ENCODE measurements at regions of chr7 and their contacts with region 1.

Region 1: DNA sequence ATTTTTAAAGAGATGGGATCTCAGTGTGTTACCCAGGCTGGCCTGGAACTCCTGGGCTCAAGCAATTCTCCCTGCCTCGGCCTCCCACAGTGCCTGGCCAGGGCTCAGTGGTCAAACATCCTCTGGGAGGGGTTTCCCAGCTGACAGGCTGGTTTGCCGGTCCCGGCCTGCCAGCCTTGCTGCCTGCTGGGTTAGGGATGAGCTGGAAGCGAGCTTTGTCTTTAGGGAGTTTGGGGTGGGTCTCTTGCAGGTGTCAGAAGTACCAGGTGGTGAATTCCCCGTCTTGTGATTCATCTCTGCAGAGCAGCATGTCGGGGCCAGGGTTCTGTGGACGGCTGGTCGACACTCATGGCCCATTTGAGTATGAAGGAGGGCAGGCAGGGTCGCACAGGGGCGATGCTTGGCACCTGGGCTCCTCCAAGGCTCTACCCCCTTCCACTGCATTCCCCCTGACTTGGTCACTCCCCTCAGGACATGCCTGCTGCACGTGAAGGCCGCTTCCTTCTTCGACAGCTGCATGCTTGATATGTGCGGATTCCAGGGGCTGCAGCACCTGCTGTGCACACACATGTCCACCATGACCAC is 30.3 kb downstream of the ZAN start:
- DNase-seq: no peak
- ATAC-seq: no peak
- H3K4me3 ChIP-seq: no peak overlapping the region
- H3K27ac ChIP-seq: no peak overlapping the region
- H3K4me1 ChIP-seq: 0 out of 3 replicates have a peak, but pooled peaks cover 4% of the 10 kb centered on the region
- CTCF ChIP-seq: no peak
- EP300 ChIP-seq: no peak
- POLR2A ChIP-seq: no peak
- RAD21 ChIP-seq: no peak

Region 2: GRCh38 chr7:100827330-100828227 is 63.9 kb after region 1 on chr7 and contains the start of gene EPHB4:
- CTCF ChIA-PET with region 1: no interaction called
- POLR2A ChIA-PET with region 1: interaction called, 12 read pairs
- DNase-seq: peak; percentile 73 to 91
- ATAC-seq: peak; percentile 84 to 92
- H3K4me3 ChIP-seq: peak within 1 kb of the TSS; percentile 100
- H3K27ac ChIP-seq: peak within 1 kb of the TSS; percentile 99
- H3K4me1 ChIP-seq: peaks cover 30% of the 10 kb centered on the region; the same call in 2 of the 3 replicates
- CTCF ChIP-seq: peak; percentile 64
- EP300 ChIP-seq: no peak
- POLR2A ChIP-seq: peak; percentile 75
- RAD21 ChIP-seq: peak; percentile 41 to 51
- polyA plus RNA-seq, gene EPHB4: 37.8 and 40.5 TPM in 2 replicates

Measured in A549 (cell line).